Activated CD8-positive, alpha-beta memory T cell treated with anti-CD3 and anti-CD28 coated beads, Interleukin-2, amount 10 ng/mL, durations not matched to agents 7 days and 5 days (primary cell): ENCODE measurements at regions of chr1 and their contacts with region 1.

Region 1: GRCh38 chr1:161201828-161202725 is at the start of gene NDUFS2:
- DNase-seq: peak; percentile 99
- ATAC-seq: peak; percentile 99
- H3K4me3 Mint-ChIP-seq: peak within 1 kb of the TSS; percentile 87
- H3K27ac Mint-ChIP-seq: peak within 1 kb of the TSS; percentile 95
- H3K4me1 Mint-ChIP-seq: peaks cover 64% of the 10 kb centered on the region
- H3K27me3 Mint-ChIP-seq: no peaks in the 10 kb centered on the region
- total RNA-seq, gene NDUFS2: 69.4 to 83.9 TPM

Region 2: DNA sequence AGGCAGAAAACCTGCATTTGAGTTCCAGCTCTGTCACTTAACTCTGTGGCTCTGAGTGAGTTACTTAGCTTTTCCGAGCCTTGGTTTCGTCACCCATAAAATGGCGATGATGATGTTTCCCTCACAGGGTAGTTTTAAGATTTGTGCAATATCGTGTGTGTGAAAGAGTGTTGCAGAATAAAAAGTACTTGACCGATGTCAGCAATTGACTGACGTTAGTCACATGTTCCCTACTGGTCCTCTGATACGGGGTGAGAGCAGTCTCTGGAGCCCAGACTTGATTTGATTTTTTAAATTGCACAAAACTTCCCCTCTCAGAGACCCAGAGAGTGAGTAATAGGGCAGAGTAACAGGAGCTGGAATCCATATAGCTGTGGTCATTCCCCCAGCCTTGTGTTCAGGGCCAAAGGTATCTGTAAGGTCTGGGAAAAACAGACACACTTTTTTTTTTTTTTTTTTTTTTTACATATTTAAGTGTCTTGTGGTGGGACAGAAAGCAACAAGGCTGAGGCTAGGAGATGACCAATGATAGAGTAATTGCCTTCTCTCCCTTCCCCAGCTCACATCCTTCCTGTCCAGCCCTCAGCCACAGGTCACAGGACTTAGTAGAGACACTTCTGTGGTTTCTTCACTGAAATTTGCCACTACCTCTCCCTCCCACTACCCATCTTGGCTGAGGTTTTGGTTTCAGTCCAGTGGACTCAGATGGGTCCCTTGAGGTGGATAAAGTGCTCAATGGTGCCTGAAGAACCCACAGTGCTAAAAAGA is 15.1 kb after region 1 on chr1:
- CTCF ChIA-PET with region 1: interaction called, 33 read pairs
- DNase-seq: peak; percentile 63
- ATAC-seq: peak; percentile 62
- H3K4me3 Mint-ChIP-seq: no peak overlapping the region
- H3K27ac Mint-ChIP-seq: peak overlapping the region; percentile 44
- H3K4me1 Mint-ChIP-seq: peaks cover 32% of the 10 kb centered on the region
- H3K27me3 Mint-ChIP-seq: no peaks in the 10 kb centered on the region

Region 3: DNA sequence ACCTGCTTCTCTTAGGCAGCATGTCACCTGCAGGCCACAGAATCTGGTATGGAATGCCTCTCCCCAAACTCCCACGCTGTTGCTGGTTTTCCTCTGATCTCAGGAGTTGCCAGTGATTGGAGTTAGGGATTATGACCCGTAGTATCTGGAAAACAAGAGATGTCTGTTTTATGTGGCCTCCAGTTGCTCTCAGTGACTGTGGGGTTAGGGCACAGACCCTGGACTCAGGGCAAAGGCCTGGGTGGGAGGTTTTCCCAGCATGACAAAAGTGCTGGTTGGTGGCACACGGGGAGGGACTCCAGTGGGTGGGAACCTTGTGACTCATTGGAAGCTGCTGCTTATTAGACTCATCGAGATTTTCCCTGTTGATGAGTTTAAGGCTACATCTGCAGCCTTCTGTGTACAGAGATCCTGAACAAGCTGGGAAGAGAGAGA is 36.0 kb after region 1 on chr1 and contains the start of gene NR1I3:
- CTCF ChIA-PET with region 1: no interaction called
- DNase-seq: no peak
- ATAC-seq: no peak
- H3K4me3 Mint-ChIP-seq: no peak within 1 kb of the TSS
- H3K27ac Mint-ChIP-seq: no peak within 1 kb of the TSS
- H3K4me1 Mint-ChIP-seq: no peaks in the 10 kb centered on the region
- H3K27me3 Mint-ChIP-seq: peaks cover 9% of the 10 kb centered on the region
- total RNA-seq, gene NR1I3: not detected